ENCODE measurements at regions of chr5 and their contacts with region 1.

Region 1: GRCh38 chr5:140647042-140647341 is 438 bp downstream of the NDUFA2 start:
- DNase-seq: no peak
- H3K4me3 ChIP-seq: peak overlapping the region; percentile 77 to 94 (median 89)
- H3K27ac ChIP-seq: peak overlapping the region; percentile 83 to 87 (median 86)
- H3K4me1 ChIP-seq: peaks cover 19 to 41% (median 39%) of the 10 kb centered on the region in 4 donors
- H3K27me3 ChIP-seq: no peaks in the 10 kb centered on the region
- CTCF ChIP-seq: no peak
- EP300 ChIP-seq: no peak
- POLR2A ChIP-seq: no peak

Region 2: GRCh38 chr5:140401362-140402257 is 245.4 kb before region 1 on chr5 and contains the start of gene ANKHD1:
- intact Hi-C with region 1: loop called (anchors 5 kb)
- DNase-seq: peak; percentile 100
- H3K4me3 ChIP-seq: peak within 1 kb of the TSS; percentile 91 to 100 (median 99)
- H3K27ac ChIP-seq: peak within 1 kb of the TSS; percentile 98 to 99 (median 99)
- H3K4me1 ChIP-seq: peaks cover 29 to 49% (median 45%) of the 10 kb centered on the region in 4 donors
- H3K27me3 ChIP-seq: no peaks in the 10 kb centered on the region
- CTCF ChIP-seq: peak in 1 of 3 experiments; percentile 46
- EP300 ChIP-seq: no peak
- POLR2A ChIP-seq: peak; percentile 86
- total RNA-seq, gene ANKHD1: 58.3 to 94.3 (median 62.2) TPM